ENCODE measurements at regions of chr17 and their contacts with region 1.

Region 1: GRCh38 chr17:42221937-42222745 is 27.8 kb upstream of the GHDC start:
- DNase-seq: peak; percentile 15 to 59
- H3K4me3 ChIP-seq: no peak overlapping the region
- H3K27ac ChIP-seq: no peak overlapping the region
- H3K4me1 ChIP-seq: no peaks in the 10 kb centered on the region
- H3K27me3 ChIP-seq: no peaks in the 10 kb centered on the region
- CTCF ChIP-seq: peak; percentile 82 to 90 (median 88)
- EP300 ChIP-seq: no peak
- POLR2A ChIP-seq: no peak
- RAD21 ChIP-seq: peak; percentile 85 to 88

Region 2: GRCh38 chr17:42087736-42088705 is 134.1 kb before region 1 on chr17:
- CTCF ChIA-PET with region 1: no interaction called
- POLR2A ChIA-PET with region 1: no interaction called
- DNase-seq: no peak
- H3K4me3 ChIP-seq: no peak overlapping the region
- H3K27ac ChIP-seq: no peak overlapping the region
- H3K4me1 ChIP-seq: peaks cover 0 to 2% (median 0%) of the 10 kb centered on the region in 4 experiments; a peak in 1 of 7 replicates
- H3K27me3 ChIP-seq: no peaks in the 10 kb centered on the region
- CTCF ChIP-seq: no peak
- EP300 ChIP-seq: no peak
- POLR2A ChIP-seq: no peak
- RAD21 ChIP-seq: no peak

Region 3: GRCh38 chr17:42188749-42189650 is 33.1 kb before region 1 on chr17:
- CTCF ChIA-PET with region 1: interaction called, 34 read pairs
- POLR2A ChIA-PET with region 1: interaction called, 3 read pairs
- DNase-seq: no peak
- H3K4me3 ChIP-seq: no peak overlapping the region
- H3K27ac ChIP-seq: no peak overlapping the region
- H3K4me1 ChIP-seq: peaks cover 0 to 10% (median 5%) of the 10 kb centered on the region in 4 experiments; a peak in 4 of 7 replicates
- H3K27me3 ChIP-seq: peaks cover 0 to 17% (median 14%) of the 10 kb centered on the region in 4 experiments; a peak in 5 of 7 replicates
- CTCF ChIP-seq: no peak
- EP300 ChIP-seq: no peak
- POLR2A ChIP-seq: no peak
- RAD21 ChIP-seq: no peak

Region 4: DNA sequence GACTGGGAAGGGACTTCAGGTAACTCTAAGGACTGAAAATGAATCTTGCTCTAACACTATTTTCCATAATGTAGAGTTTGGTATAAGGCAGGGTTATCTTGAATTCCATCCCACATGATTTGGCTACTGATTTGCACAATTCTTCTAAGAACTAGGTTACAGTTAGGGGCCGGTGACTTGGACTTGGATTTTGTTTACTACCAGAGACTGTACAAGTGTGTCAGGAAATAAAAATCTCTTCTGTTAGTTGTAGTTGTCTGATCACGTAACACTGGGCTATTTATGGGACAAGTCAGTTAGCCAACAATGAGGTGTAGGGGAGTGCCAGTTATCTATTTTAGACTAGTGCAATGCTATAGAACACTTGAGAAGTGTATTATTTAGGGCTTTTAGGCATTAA is 11.8 kb after region 1 on chr17:
- CTCF ChIA-PET with region 1: interaction called, 56 read pairs
- POLR2A ChIA-PET with region 1: no interaction called
- DNase-seq: no peak
- H3K4me3 ChIP-seq: no peak overlapping the region
- H3K27ac ChIP-seq: no peak overlapping the region
- H3K4me1 ChIP-seq: no peaks in the 10 kb centered on the region
- H3K27me3 ChIP-seq: no peaks in the 10 kb centered on the region
- CTCF ChIP-seq: no peak
- EP300 ChIP-seq: no peak
- POLR2A ChIP-seq: no peak
- RAD21 ChIP-seq: no peak

Region 5: DNA sequence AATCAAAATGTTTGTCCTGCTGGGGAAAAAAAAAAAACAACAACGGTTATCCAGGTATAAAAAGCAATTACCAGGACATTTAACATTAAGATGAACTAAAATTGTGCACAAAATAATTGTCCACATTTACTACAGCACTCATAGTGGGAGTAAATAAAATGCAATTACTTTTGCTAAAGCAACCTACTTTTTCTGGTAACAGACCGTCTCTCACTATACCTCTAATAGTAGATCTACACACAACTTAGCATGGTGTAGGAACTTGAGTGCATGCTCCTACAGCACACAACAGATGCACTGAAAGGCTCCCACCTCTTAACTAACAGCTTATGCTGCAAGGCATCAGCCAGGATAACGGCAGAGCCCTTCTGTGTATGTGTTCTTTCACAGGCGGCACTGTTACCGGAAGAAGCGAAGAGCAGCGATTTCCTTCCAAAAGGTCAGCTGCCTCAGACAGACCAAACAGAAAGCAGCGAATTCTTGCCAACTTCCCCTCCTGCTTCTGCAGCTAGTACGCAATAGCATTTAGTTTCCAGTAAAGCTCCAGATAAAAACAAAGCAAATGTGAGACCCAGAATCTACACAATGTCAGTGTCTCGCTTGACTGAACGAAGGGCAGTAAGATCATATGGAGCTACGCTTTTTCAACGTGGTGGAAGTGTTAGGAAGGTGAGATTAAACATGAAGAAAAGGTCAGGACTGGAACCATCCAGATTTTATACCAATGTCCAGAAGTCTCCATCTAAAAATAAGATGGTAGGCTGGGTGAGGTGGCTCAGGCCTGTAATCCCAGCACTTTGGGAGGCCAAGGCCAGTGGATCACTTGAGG is 26.4 kb after region 1 on chr17:
- CTCF ChIA-PET with region 1: interaction called, 53 read pairs
- POLR2A ChIA-PET with region 1: no interaction called
- DNase-seq: no peak
- H3K4me3 ChIP-seq: no peak overlapping the region
- H3K27ac ChIP-seq: peak overlapping the region; percentile 11; the same call in 1 of the 2 replicates
- H3K4me1 ChIP-seq: peaks cover 0 to 3% (median 2%) of the 10 kb centered on the region in 4 experiments; a peak in 5 of 7 replicates
- H3K27me3 ChIP-seq: no peaks in the 10 kb centered on the region
- CTCF ChIP-seq: no peak
- EP300 ChIP-seq: no peak
- POLR2A ChIP-seq: no peak
- RAD21 ChIP-seq: no peak

Region 6: GRCh38 chr17:42276359-42276608 is 54.1 kb after region 1 on chr17 and contains the start of gene STAT5B:
- CTCF ChIA-PET with region 1: interaction called, 26 read pairs
- POLR2A ChIA-PET with region 1: interaction called, 3 read pairs
- DNase-seq: peak in 1 of 2 experiments; percentile 78
- H3K4me3 ChIP-seq: peak within 1 kb of the TSS; percentile 53 to 92 (median 75)
- H3K27ac ChIP-seq: peak within 1 kb of the TSS; percentile 61
- H3K4me1 ChIP-seq: peaks cover 6 to 20% (median 11%) of the 10 kb centered on the region in 4 experiments; a peak in 6 of 7 replicates
- H3K27me3 ChIP-seq: peaks cover 0 to 4% (median 2%) of the 10 kb centered on the region in 4 experiments; a peak in 1 of 7 replicates
- CTCF ChIP-seq: no peak
- EP300 ChIP-seq: no peak
- POLR2A ChIP-seq: no peak; a peak in 1 of 3 replicates
- RAD21 ChIP-seq: no peak
- total RNA-seq, gene STAT5B: 43.3 and 52.6 TPM in 2 replicates

Region 7: DNA sequence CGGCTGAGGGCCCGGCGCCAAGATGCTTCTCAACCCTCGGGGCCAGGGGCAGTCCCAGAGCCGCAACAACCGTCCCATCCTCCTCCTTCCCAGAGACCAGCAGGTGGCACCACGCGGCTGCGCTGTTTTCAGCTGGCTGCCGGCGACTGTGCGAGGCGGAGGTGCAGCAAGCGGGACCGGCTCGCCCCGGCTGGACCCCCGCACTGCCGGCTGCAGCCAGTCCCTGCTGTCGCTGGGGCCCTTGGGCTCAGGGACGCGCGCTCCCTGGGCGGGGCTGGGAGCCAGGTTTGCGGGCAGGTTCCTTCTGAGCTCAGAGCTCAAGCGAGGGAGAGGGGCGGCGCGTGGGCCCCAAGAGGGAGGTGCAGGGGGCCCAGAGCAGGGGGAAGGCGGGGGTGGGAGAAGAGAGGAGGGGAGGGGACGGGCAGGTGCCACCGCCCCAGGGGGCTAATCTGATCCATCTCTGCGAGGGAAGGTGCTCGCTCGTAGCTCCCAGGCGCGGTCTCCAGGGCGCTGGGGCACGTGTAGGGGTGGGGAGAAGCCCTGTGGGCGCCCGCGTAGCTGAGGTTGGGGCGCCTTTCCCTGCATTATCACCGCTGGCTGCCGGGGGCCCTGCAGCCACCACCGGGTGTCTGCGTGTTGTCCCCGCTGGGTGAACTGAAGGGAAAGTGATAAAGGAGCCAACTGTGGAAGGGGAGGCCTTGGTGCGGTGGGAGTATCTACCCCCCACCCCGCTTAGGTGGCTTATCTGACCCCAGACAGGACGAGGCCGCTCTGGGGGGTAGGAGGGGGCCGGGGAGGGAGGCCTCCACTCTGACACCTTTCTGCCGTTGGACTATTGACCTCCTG is 90.4 kb after region 1 on chr17:
- CTCF ChIA-PET with region 1: interaction called, 16 read pairs
- POLR2A ChIA-PET with region 1: no interaction called
- DNase-seq: peak in 1 of 2 experiments; percentile 90
- H3K4me3 ChIP-seq: peak overlapping the region in 3 of 4 experiments; percentile 13 to 46 (median 26); a peak in 4 of 8 replicates
- H3K27ac ChIP-seq: no peak overlapping the region
- H3K4me1 ChIP-seq: peaks cover 5 to 20% (median 8%) of the 10 kb centered on the region in 4 experiments; a peak in 6 of 7 replicates
- H3K27me3 ChIP-seq: no peaks in the 10 kb centered on the region
- CTCF ChIP-seq: peak; percentile 67 to 81 (median 74)
- EP300 ChIP-seq: peak in 1 of 2 experiments; percentile 73; a peak in 1 of 3 replicates
- POLR2A ChIP-seq: no peak
- RAD21 ChIP-seq: peak; percentile 72 to 76

Measured in H1 (cell line).